Activated naive CD4-positive, alpha-beta T cell treated with anti-CD3 and anti-CD28 coated beads for 36 hours (primary cell): ENCODE measurements at regions of chr7 and their contacts with region 1.

Region 1: GRCh38 chr7:92669616-92670165 is 79.5 kb upstream of the FAM133B start:
- DNase-seq: peak; percentile 29
- H3K4me3 Mint-ChIP-seq: no peak overlapping the region
- H3K27ac Mint-ChIP-seq: no peak overlapping the region
- H3K4me1 Mint-ChIP-seq: peaks cover 59% of the 10 kb centered on the region
- H3K27me3 Mint-ChIP-seq: no peaks in the 10 kb centered on the region

Region 2: DNA sequence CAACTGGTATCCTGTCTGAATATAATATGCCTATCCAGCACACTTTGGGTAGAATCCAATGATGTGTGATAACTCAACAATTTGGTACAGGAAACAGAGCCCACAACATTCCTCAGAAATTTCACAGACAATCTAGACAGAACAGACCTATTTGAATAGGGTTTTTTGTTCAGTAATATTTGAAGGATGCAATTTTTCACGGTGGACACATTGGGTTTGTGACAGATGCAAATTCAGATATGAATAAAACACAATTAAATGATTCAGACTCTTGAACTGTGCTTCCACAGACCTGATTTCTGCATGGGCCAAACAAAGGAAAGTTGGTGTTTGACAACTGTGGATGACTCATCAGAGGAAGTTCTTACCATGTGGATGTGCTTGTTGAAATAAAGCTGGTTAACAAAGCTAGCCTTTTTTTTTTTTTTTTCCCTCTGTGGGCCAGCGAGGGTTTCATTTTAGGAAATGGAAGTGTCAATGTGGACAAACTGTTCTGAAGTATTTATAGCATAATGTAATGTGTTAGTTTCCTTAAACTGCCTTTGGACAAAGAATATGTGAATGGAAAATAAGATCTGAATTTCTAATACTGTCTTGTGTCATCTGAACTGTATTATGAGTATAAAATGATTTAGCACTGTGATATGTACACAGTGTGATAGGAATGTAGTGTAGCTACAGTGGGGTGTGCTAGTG is 36.3 kb before region 1 on chr7:
- CTCF ChIA-PET with region 1: no interaction called
- intact Hi-C with region 1: no loop called
- DNase-seq: peak; percentile 49
- H3K4me3 Mint-ChIP-seq: no peak overlapping the region
- H3K27ac Mint-ChIP-seq: peak overlapping the region; percentile 92
- H3K4me1 Mint-ChIP-seq: peaks cover 84% of the 10 kb centered on the region
- H3K27me3 Mint-ChIP-seq: no peaks in the 10 kb centered on the region

Region 3: DNA sequence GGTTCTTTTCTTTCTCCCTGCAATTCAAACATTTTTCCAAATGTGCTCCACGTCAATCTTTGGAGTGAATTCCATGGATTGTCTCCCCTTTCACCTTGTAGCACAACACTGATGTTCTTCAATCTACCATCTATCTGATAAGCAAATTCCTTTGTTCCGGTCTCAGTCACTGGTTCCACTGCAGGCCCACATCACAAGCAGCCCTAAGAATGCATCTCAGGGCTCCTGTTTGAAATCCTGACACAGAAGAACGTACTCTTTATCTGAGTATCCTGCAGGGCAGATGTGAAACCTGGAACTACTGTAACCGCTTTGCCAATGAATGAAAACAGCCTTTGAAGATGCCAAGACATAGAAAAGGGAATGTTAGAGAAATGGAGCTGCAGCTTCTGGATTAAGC is 16.6 kb before region 1 on chr7:
- CTCF ChIA-PET with region 1: no interaction called
- intact Hi-C with region 1: loop called (anchors 1 kb)
- DNase-seq: no peak
- H3K4me3 Mint-ChIP-seq: no peak overlapping the region
- H3K27ac Mint-ChIP-seq: peak overlapping the region; percentile 70
- H3K4me1 Mint-ChIP-seq: peaks cover 70% of the 10 kb centered on the region
- H3K27me3 Mint-ChIP-seq: no peaks in the 10 kb centered on the region